Endothelial cell of umbilical vein (primary cell): ENCODE measurements at regions of chr5 and their contacts with region 1.

Region 1: GRCh38 chr5:134577796-134578363 is 52.4 kb downstream of the JADE2 start:
- DNase-seq: peak; percentile 80
- H3K4me3 ChIP-seq: no peak overlapping the region
- H3K27ac ChIP-seq: peak overlapping the region; percentile 67
- H3K4me1 ChIP-seq: peaks cover 37% of the 10 kb centered on the region
- H3K27me3 ChIP-seq: no peaks in the 10 kb centered on the region
- CTCF ChIP-seq: peak; percentile 83 to 88
- POLR2A ChIP-seq: no peak

Region 2: DNA sequence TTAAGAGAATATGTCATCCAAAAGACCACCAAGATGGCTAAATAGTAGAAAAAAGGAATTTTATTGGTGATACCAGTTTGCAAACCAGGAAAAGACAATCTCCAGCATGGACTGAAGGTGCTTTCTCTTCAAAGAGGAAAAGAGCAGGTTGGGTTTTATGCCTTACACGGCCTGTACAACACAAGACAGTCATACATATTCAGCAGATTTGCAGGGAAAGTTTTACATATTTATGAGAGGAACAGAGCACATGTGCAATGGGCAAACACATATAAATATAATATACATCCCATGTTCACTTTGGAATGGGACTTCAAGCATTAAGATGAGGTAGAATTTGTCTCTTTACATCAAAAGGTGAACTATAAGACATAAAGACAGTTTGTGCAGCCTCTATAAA is 281.7 kb before region 1 on chr5:
- CTCF ChIA-PET with region 1: interaction called, 18 read pairs
- POLR2A ChIA-PET with region 1: no interaction called
- dilution Hi-C with region 1: no loop called
- intact Hi-C with region 1: no loop called
- DNase-seq: no peak
- H3K4me3 ChIP-seq: no peak overlapping the region
- H3K27ac ChIP-seq: no peak overlapping the region
- H3K4me1 ChIP-seq: no peaks in the 10 kb centered on the region
- H3K27me3 ChIP-seq: peaks cover 0 to 1% of the 10 kb centered on the region in 2 experiments
- CTCF ChIP-seq: no peak
- POLR2A ChIP-seq: no peak

Region 3: DNA sequence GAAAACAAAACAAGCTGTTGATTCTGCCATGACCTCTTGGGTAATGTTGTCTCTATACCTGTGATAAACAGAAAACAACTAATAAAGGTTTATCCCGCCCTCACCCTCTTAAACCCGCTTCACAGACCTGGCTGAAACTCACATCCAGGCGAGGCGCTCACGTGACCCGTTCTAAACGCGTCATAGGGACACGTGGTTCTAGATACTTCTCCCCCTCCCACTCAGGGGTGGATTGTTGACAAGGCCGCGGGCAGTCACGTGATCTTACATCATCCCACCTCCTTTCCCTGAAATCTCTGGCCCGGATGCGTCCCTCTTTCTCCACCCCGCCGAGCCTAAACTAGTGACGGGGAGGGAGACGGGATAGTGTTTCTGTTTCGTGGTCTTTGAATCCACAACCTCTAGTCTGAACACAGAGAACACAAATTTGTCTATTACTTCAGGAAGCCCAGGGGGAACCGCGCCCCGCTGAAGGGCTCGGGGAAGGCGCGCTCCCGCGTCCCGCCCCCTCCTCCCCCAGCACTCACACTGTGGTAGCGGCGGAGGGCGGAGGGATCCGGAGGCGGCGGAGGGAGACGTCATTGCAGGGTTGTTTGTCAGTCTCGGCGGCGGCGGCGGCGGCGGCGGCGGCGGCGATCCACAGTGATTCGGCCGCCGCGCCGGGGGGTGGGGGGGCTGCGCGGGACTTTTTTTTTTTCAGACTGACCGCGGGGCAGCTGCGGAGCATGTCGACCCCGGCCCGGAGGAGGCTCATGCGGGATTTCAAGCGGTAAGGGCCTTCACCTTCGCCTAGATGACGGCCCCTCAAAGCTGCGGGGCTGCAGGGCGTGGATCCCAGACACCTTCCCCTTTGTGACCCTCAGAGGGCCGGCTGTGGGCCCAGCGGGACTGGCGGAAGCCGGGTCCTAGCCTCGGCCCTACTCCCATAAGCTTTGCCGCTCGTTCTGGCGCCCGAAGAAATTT is 206.7 kb before region 1 on chr5 and contains the start of gene UBE2B:
- CTCF ChIA-PET with region 1: interaction called, 9 read pairs
- POLR2A ChIA-PET with region 1: interaction called, 3 read pairs
- dilution Hi-C with region 1: no loop called
- intact Hi-C with region 1: loop called (anchors 2 kb)
- DNase-seq: peak; percentile 99
- H3K4me3 ChIP-seq: peak within 1 kb of the TSS; percentile 91 to 94 (median 93)
- H3K27ac ChIP-seq: peak within 1 kb of the TSS; percentile 97
- H3K4me1 ChIP-seq: peaks cover 11% of the 10 kb centered on the region
- H3K27me3 ChIP-seq: no peaks in the 10 kb centered on the region
- CTCF ChIP-seq: no peak
- POLR2A ChIP-seq: peak; percentile 90
- total RNA-seq, gene UBE2B: 109 and 110 TPM in 2 replicates

Region 4: GRCh38 chr5:134465816-134466240 is 112.1 kb before region 1 on chr5:
- CTCF ChIA-PET with region 1: interaction called, 7 read pairs
- POLR2A ChIA-PET with region 1: no interaction called
- dilution Hi-C with region 1: no loop called
- intact Hi-C with region 1: loop called (anchors 2 kb)
- DNase-seq: peak; percentile 94
- H3K4me3 ChIP-seq: peak overlapping the region in 2 of 3 experiments; percentile 29 to 46
- H3K27ac ChIP-seq: peak overlapping the region; percentile 94
- H3K4me1 ChIP-seq: peaks cover 17% of the 10 kb centered on the region
- H3K27me3 ChIP-seq: no peaks in the 10 kb centered on the region
- CTCF ChIP-seq: no peak
- POLR2A ChIP-seq: peak; percentile 66

Region 5: GRCh38 chr5:134547579-134547978 is 30.3 kb before region 1 on chr5:
- CTCF ChIA-PET with region 1: interaction called, 10 read pairs
- POLR2A ChIA-PET with region 1: no interaction called
- dilution Hi-C with region 1: no loop called
- intact Hi-C with region 1: no loop called
- DNase-seq: peak; percentile 37
- H3K4me3 ChIP-seq: no peak overlapping the region
- H3K27ac ChIP-seq: no peak overlapping the region
- H3K4me1 ChIP-seq: peaks cover 35% of the 10 kb centered on the region
- H3K27me3 ChIP-seq: no peaks in the 10 kb centered on the region
- CTCF ChIP-seq: no peak
- POLR2A ChIP-seq: no peak

Region 6: GRCh38 chr5:134561871-134562296 is 16.0 kb before region 1 on chr5:
- CTCF ChIA-PET with region 1: interaction called, 112 read pairs
- POLR2A ChIA-PET with region 1: interaction called, 3 read pairs
- dilution Hi-C with region 1: no loop called
- intact Hi-C with region 1: loop called (anchors 1 kb)
- DNase-seq: peak; percentile 98
- H3K4me3 ChIP-seq: no peak overlapping the region
- H3K27ac ChIP-seq: peak overlapping the region; percentile 47
- H3K4me1 ChIP-seq: peaks cover 20% of the 10 kb centered on the region
- H3K27me3 ChIP-seq: no peaks in the 10 kb centered on the region
- CTCF ChIP-seq: peak; percentile 75 to 86
- POLR2A ChIP-seq: peak; percentile 47